ENCODE measurements at regions of chr10 and their contacts with region 1.

Region 1: GRCh38 chr10:129971381-129972144 is 7.5 kb upstream of the EBF3 start:
- DNase-seq: no peak
- ATAC-seq: peak; percentile 71
- H3K4me3 ChIP-seq: no peak overlapping the region
- H3K4me3 Mint-ChIP-seq: peak overlapping the region; percentile 29 to 86 (median 68)
- H3K27ac ChIP-seq: no peak overlapping the region
- H3K27ac Mint-ChIP-seq: peak overlapping the region in 3 of 9 donors; percentile 46 to 85 (median 69)
- H3K4me1 ChIP-seq: no peaks in the 10 kb centered on the region
- H3K4me1 Mint-ChIP-seq: peaks cover 8 to 25% (median 21%) of the 10 kb centered on the region in 7 donors
- H3K27me3 ChIP-seq: peaks cover 0 to 38% of the 10 kb centered on the region in 2 donors
- H3K27me3 Mint-ChIP-seq: peaks cover 51 to 70% (median 61%) of the 10 kb centered on the region in 5 donors

Region 2: GRCh38 chr10:128263891-128264688 is 1707.5 kb before region 1 on chr10:
- CTCF ChIA-PET with region 1: no interaction called
- POLR2A ChIA-PET with region 1: no interaction called
- intact Hi-C with region 1: loop called in 1 of 2 experiments (anchors 2 kb)
- DNase-seq: peak in 6 of 9 donors; percentile 9 to 37 (median 26)
- ATAC-seq: no peak
- H3K4me3 ChIP-seq: no peak overlapping the region
- H3K4me3 Mint-ChIP-seq: no peak overlapping the region
- H3K27ac ChIP-seq: no peak overlapping the region
- H3K27ac Mint-ChIP-seq: no peak overlapping the region
- H3K4me1 ChIP-seq: no peaks in the 10 kb centered on the region
- H3K4me1 Mint-ChIP-seq: no peaks in the 10 kb centered on the region
- H3K27me3 ChIP-seq: peaks cover 0 to 10% of the 10 kb centered on the region in 2 donors
- H3K27me3 Mint-ChIP-seq: peaks cover 40 to 72% (median 59%) of the 10 kb centered on the region in 5 donors

Region 3: GRCh38 chr10:129888784-129889616 is 82.6 kb before region 1 on chr10:
- CTCF ChIA-PET with region 1: no interaction called
- POLR2A ChIA-PET with region 1: no interaction called
- intact Hi-C with region 1: loop called in 1 of 2 experiments (anchors 5 kb)
- DNase-seq: peak in 8 of 9 donors; percentile 4 to 34 (median 16)
- ATAC-seq: peak; percentile 50
- H3K4me3 ChIP-seq: no peak overlapping the region
- H3K4me3 Mint-ChIP-seq: no peak overlapping the region
- H3K27ac ChIP-seq: no peak overlapping the region
- H3K27ac Mint-ChIP-seq: no peak overlapping the region
- H3K4me1 ChIP-seq: no peaks in the 10 kb centered on the region
- H3K4me1 Mint-ChIP-seq: no peaks in the 10 kb centered on the region
- H3K27me3 ChIP-seq: no peaks in the 10 kb centered on the region
- H3K27me3 Mint-ChIP-seq: peaks cover 0 to 3% (median 0%) of the 10 kb centered on the region in 5 donors

Region 4: DNA sequence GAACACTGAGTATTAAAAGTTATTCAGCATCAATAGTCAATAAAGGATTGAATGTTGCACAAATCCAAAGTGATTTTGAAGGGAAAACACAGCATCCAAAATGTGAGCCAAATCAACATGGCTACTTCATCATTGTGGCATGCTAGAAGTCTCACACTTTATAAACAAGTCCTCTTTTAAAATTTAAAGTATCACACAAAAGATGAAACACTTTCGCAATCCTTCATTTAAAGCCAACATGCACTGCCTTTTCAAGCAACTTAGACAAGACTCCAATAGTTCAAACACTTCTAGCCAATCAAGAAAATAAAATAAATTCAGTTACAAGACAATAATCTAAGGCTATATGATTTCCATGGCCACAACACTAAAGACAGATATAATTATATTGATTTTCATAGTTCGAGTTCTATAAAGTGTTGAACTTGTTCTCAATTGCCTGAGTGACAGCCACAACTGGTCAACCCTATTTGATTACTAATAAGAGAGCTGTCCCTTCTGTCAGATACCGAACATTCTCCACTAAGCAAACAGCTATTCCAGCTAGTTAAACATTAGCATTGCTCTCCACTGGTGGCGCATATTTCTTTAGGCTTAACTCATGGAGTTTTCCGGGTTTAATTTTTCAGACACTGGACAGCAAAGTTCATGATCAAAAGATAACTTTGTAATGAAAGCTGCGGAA is 15.8 kb before region 1 on chr10:
- CTCF ChIA-PET with region 1: no interaction called
- POLR2A ChIA-PET with region 1: no interaction called
- intact Hi-C with region 1: loop called in 1 of 2 experiments (anchors 2 kb)
- DNase-seq: no peak
- ATAC-seq: no peak
- H3K4me3 ChIP-seq: no peak overlapping the region
- H3K4me3 Mint-ChIP-seq: no peak overlapping the region
- H3K27ac ChIP-seq: no peak overlapping the region
- H3K27ac Mint-ChIP-seq: no peak overlapping the region
- H3K4me1 ChIP-seq: peaks cover 0 to 4% of the 10 kb centered on the region in 2 donors
- H3K4me1 Mint-ChIP-seq: peaks cover 6 to 17% (median 13%) of the 10 kb centered on the region in 7 donors
- H3K27me3 ChIP-seq: peaks cover 0 to 27% of the 10 kb centered on the region in 2 donors
- H3K27me3 Mint-ChIP-seq: peaks cover 57 to 79% (median 73%) of the 10 kb centered on the region in 5 donors

Region 5: GRCh38 chr10:130074639-130075038 is 103.1 kb after region 1 on chr10:
- CTCF ChIA-PET with region 1: no interaction called
- POLR2A ChIA-PET with region 1: no interaction called
- intact Hi-C with region 1: no loop called
- DNase-seq: no peak
- ATAC-seq: no peak
- H3K4me3 ChIP-seq: no peak overlapping the region
- H3K4me3 Mint-ChIP-seq: no peak overlapping the region
- H3K27ac ChIP-seq: no peak overlapping the region
- H3K27ac Mint-ChIP-seq: no peak overlapping the region
- H3K4me1 ChIP-seq: no peaks in the 10 kb centered on the region
- H3K4me1 Mint-ChIP-seq: no peaks in the 10 kb centered on the region
- H3K27me3 ChIP-seq: no peaks in the 10 kb centered on the region
- H3K27me3 Mint-ChIP-seq: peaks cover 0 to 2% (median 0%) of the 10 kb centered on the region in 5 donors